ENCODE measurements at regions of chr21 and their contacts with region 1.

Region 1: DNA sequence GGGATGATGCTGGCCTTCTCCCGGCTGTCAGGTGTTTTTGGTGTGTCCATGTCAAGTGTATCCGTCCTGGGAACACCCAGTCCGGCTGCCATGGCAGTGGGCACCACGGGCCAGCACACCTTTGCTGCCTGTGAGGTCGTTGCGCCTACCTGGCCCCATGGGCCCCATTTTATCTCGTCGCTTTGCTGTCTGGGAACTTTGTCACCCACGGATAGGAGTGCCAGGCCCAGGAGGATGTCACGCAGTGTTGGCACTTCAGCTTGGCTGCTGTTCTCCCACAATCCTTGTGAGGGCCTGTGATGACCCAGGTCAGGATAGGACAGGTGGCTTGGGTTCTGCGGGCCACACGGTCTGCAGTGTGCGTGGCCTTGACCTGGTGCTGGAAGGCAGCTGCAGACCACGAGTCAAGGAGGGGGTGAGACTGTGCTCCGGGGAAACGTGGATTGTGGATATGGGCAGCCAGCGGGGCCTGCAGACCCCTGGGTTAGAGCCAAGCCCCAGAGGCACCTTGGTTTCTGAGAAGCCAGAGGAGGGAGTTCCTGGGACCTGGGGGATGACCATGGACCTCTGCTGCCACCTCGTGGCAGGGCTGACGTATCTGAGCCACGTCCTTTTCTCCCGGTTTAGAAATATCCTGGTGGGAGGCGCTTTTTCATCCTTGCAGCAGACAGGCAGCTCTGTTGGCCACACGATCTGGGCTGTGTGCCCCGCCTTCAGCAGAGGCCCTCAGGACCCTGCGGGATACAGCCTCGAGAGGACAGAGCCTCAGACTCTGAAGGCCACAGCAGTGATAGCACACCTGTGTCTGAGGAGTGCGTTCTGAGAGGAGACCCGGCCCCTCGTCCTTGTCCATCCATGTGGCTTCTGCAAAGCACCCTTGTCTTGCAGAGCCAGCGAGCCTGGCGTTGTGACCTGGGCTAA is 161.1 kb upstream of the COL6A1 start:
- DNase-seq: peak; percentile 80 to 91 (median 90)
- ATAC-seq: peak; percentile 81 to 83
- H3K4me3 ChIP-seq: no peak overlapping the region
- H3K27ac ChIP-seq: no peak overlapping the region
- H3K4me1 ChIP-seq: no peaks in the 10 kb centered on the region
- H3K27me3 ChIP-seq: no peaks in the 10 kb centered on the region

Region 2: GRCh38 chr21:45478115-45478801 is 342.2 kb before region 1 on chr21:
- intact Hi-C with region 1: loop called in 1 of 4 experiments (anchors 10 kb)
- DNase-seq: peak; percentile 75 to 88 (median 87)
- ATAC-seq: peak; percentile 53 to 58
- H3K4me3 ChIP-seq: no peak overlapping the region
- H3K27ac ChIP-seq: no peak overlapping the region
- H3K4me1 ChIP-seq: peaks cover 3% of the 10 kb centered on the region
- H3K27me3 ChIP-seq: no peaks in the 10 kb centered on the region

Region 3: DNA sequence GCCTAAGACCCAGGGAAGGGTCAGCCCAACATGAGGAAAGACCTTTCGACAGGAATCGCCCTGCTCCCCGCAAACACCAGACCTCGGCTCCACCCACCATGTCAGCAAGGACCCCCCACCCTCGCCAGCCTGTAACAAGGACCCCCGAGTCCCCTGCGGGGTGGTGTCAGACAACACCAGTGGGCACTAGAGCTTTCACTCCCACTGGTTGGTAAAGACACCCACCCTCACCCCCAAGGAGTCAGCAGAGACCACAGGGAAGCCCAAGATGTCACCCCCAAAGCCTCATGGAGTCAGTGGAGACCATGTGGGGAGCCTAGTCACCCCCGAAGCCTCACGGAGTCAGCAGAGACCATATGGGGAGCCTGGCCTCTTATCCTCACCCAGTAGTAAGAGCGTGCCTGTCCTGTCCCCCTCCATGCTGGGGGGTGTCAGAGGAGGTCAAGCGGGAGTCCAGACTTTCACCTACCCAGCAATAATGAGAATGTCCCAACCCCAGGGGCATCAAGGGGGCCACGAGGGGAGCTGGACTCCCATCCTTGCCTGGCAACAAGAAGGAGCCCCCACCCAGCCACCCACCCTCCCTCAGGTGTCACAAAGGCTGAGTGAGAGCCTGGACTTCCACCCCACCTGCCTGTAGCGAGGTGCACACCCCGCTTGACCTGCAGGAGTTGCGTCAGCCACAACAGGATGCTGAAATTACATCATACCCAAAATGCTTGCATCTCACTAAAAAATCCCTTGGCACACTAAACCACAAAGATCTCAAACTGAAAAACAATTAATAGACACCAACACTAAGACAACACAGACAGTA is 303.0 kb before region 1 on chr21:
- intact Hi-C with region 1: no loop called
- DNase-seq: peak; percentile 14 to 39 (median 30)
- ATAC-seq: no peak
- H3K4me3 ChIP-seq: no peak overlapping the region
- H3K27ac ChIP-seq: no peak overlapping the region
- H3K4me1 ChIP-seq: no peaks in the 10 kb centered on the region
- H3K27me3 ChIP-seq: no peaks in the 10 kb centered on the region

Region 4: GRCh38 chr21:46099476-46099875 is 279.0 kb after region 1 on chr21:
- intact Hi-C with region 1: no loop called
- DNase-seq: peak; percentile 40 to 76 (median 71)
- ATAC-seq: peak; percentile 23 to 55
- H3K4me3 ChIP-seq: peak overlapping the region; percentile 94
- H3K27ac ChIP-seq: peak overlapping the region; percentile 74
- H3K4me1 ChIP-seq: peaks cover 5% of the 10 kb centered on the region
- H3K27me3 ChIP-seq: no peaks in the 10 kb centered on the region